Activated CD4-positive, alpha-beta T cell treated with anti-CD3 and anti-CD28 coated beads for 36 hours (primary cell): ENCODE measurements at regions of chr20 and their contacts with region 1.

Region 1: DNA sequence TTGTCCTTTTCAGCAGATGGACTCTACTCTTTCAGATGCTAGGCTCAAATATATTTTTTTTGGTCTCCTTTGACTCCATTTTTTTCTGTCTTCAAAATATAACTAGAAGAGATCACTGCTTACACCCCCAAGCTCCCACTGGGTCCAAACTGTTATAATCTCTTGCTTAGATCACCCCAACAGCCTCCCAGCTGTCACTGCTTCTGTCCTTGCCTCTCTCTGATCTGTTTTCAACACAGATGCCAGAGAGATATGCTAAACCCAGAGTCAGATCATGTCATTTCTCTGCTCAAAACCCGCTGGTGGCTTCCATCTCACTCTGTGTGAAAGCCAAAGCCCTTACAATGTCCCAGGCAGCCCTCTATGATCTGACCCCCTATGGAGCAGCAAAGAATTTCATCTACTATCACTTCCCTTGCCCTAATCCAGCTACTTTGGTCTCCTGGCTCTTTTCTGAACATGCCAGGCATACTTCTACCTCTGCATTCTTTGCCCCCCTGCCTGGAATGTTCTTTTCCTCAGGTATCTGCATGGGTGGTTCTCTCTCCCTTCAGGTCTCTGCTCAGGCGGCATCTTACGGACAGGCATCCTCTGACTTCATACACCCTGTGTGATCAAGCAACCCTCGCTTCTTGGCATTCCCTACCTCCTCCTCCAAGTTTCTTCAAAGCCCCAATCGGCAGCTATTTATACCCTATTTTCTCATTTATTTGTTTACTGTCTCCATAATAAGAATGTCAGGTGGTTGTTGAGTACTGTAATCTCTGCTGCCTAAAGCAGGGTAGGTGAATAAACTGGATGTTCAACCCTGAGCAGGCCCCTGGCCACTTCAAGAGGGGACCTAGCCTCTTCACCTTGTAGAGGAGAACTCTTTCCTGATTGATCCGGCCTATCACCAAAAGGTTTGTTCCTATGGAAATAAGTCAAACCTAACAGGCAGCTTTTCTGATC is 43.6 kb upstream of the SLC4A11 start:
- DNase-seq: no peak
- ATAC-seq: no peak
- H3K4me3 Mint-ChIP-seq: no peak overlapping the region
- H3K27ac Mint-ChIP-seq: no peak overlapping the region
- H3K4me1 Mint-ChIP-seq: no peaks in the 10 kb centered on the region
- H3K27me3 Mint-ChIP-seq: no peaks in the 10 kb centered on the region

Region 2: GRCh38 chr20:3146732-3147341 is 135.7 kb before region 1 on chr20:
- CTCF ChIA-PET with region 1: no interaction called
- POLR2A ChIA-PET with region 1: interaction called, 12 read pairs
- intact Hi-C with region 1: no loop called
- DNase-seq: no peak
- ATAC-seq: no peak
- H3K4me3 Mint-ChIP-seq: no peak overlapping the region
- H3K27ac Mint-ChIP-seq: no peak overlapping the region
- H3K4me1 Mint-ChIP-seq: peaks cover 36% of the 10 kb centered on the region
- H3K27me3 Mint-ChIP-seq: no peaks in the 10 kb centered on the region